ENCODE measurements at regions of chr6 and their contacts with region 1.

Region 1: GRCh38 chr6:163419413-163420288 is 5.1 kb downstream of the QKI start:
- DNase-seq: no peak
- ATAC-seq: no peak

Region 2: DNA sequence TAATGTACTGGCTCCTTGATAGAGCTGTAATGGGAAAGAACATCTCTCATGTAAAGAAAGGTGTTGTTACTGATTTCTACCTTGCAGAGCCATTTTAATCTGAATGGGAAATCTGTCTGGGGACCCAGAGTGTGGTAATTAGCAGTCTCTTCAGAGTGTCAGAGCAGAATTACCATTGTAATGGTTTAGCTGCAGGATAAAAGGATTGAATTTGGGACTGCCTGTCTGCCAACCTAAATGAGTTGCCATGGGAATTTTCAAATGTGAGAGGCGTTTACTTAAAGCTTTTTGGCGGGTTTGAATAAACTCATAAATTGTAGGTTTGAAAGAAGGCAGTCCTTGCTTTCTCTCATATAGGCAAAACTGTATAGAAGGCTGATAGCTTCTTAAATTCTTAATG is 123.7 kb after region 1 on chr6:
- intact Hi-C with region 1: no loop called
- DNase-seq: no peak
- ATAC-seq: no peak

Region 3: GRCh38 chr6:164106345-164106769 is 686.7 kb after region 1 on chr6:
- intact Hi-C with region 1: loop called (anchors 5 kb)
- DNase-seq: peak; percentile 81
- ATAC-seq: peak; percentile 60

Measured in Right ventricle myocardium superior (tissue), 1 donor.